ENCODE measurements at regions of chr6 and their contacts with region 1.

Region 1: GRCh38 chr6:119627908-119628669 is 278.5 kb upstream of the MAN1A1 start:
- DNase-seq: peak; percentile 58 to 84 (median 63)
- ATAC-seq: peak; percentile 91
- H3K4me3 ChIP-seq: no peak overlapping the region
- H3K27ac ChIP-seq: peak overlapping the region; percentile 89
- H3K4me1 ChIP-seq: peaks cover 8 to 31% of the 10 kb centered on the region in 2 experiments; a peak in 3 of 5 replicates
- H3K27me3 ChIP-seq: no peaks in the 10 kb centered on the region
- CTCF ChIP-seq: peak in 1 of 3 experiments; percentile 27; a peak in 2 of 6 replicates
- EP300 ChIP-seq: peak; percentile 82
- POLR2A ChIP-seq: no peak
- RAD21 ChIP-seq: peak; percentile 41 to 66

Region 2: GRCh38 chr6:119147101-119148053 is 480.7 kb before region 1 on chr6:
- CTCF ChIA-PET with region 1: no interaction called
- POLR2A ChIA-PET with region 1: no interaction called
- in situ Hi-C with region 1: no loop called
- intact Hi-C with region 1: loop called (anchors 5 kb)
- DNase-seq: peak; percentile 89 to 92 (median 91)
- ATAC-seq: peak; percentile 83
- H3K4me3 ChIP-seq: no peak overlapping the region
- H3K27ac ChIP-seq: peak overlapping the region; percentile 85
- H3K4me1 ChIP-seq: peaks cover 23 to 39% of the 10 kb centered on the region in 2 experiments
- H3K27me3 ChIP-seq: no peaks in the 10 kb centered on the region
- CTCF ChIP-seq: no peak
- EP300 ChIP-seq: peak; percentile 87
- POLR2A ChIP-seq: no peak
- RAD21 ChIP-seq: peak in 1 of 2 experiments; percentile 15; a peak in 1 of 4 replicates

Region 3: DNA sequence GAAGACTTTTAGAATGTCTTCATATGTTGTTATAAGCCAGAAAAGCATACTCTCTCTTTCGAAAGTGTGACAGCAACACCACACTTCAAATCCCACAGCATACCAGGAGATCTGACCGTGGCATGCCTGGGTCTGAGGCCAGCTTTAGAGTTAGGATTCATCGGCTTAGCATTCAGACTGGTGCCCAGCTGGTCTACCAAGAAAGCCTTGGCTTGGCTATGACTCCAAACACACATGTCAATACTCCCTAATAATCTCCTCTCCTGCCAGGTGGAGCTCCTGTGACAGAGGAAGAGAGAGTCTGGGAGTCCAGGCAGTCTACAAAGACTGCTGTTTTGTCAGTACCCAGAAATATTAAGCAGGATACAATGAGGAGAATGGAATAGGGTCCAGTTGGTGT is 201.5 kb before region 1 on chr6:
- CTCF ChIA-PET with region 1: no interaction called
- POLR2A ChIA-PET with region 1: no interaction called
- in situ Hi-C with region 1: no loop called
- intact Hi-C with region 1: loop called (anchors 5 kb)
- DNase-seq: no peak
- ATAC-seq: peak; percentile 66; the same call in 2 of the 3 replicates
- H3K4me3 ChIP-seq: no peak overlapping the region
- H3K27ac ChIP-seq: no peak overlapping the region
- H3K4me1 ChIP-seq: peaks cover 0 to 6% of the 10 kb centered on the region in 2 experiments; a peak in 1 of 5 replicates
- H3K27me3 ChIP-seq: no peaks in the 10 kb centered on the region
- CTCF ChIP-seq: 0 out of 6 replicates have a peak, but pooled peaks of 1 of the 3 experiments have one; percentile 10
- EP300 ChIP-seq: no peak
- POLR2A ChIP-seq: no peak
- RAD21 ChIP-seq: peak in 1 of 2 experiments; percentile 40; a peak in 2 of 4 replicates

Region 4: GRCh38 chr6:119495230-119495683 is 132.8 kb before region 1 on chr6:
- CTCF ChIA-PET with region 1: no interaction called
- POLR2A ChIA-PET with region 1: interaction called, 4 read pairs
- in situ Hi-C with region 1: no loop called
- intact Hi-C with region 1: loop called (anchors 5 kb)
- DNase-seq: peak in 1 of 4 experiments; percentile 22
- ATAC-seq: no peak
- H3K4me3 ChIP-seq: no peak overlapping the region
- H3K27ac ChIP-seq: no peak overlapping the region
- H3K4me1 ChIP-seq: peaks cover 2 to 7% of the 10 kb centered on the region in 2 experiments; a peak in 2 of 5 replicates
- H3K27me3 ChIP-seq: no peaks in the 10 kb centered on the region
- CTCF ChIP-seq: no peak
- EP300 ChIP-seq: no peak
- POLR2A ChIP-seq: no peak
- RAD21 ChIP-seq: no peak

Region 5: GRCh38 chr6:119541132-119541905 is 86.8 kb before region 1 on chr6:
- CTCF ChIA-PET with region 1: no interaction called
- POLR2A ChIA-PET with region 1: no interaction called
- in situ Hi-C with region 1: no loop called
- intact Hi-C with region 1: loop called (anchors 2 kb)
- DNase-seq: no peak
- ATAC-seq: 0 out of 3 replicates have a peak, but pooled peaks have one; percentile 12
- H3K4me3 ChIP-seq: no peak overlapping the region
- H3K27ac ChIP-seq: no peak overlapping the region
- H3K4me1 ChIP-seq: peaks cover 3 to 22% of the 10 kb centered on the region in 2 experiments; a peak in 4 of 5 replicates
- H3K27me3 ChIP-seq: no peaks in the 10 kb centered on the region
- CTCF ChIP-seq: no peak
- EP300 ChIP-seq: no peak
- POLR2A ChIP-seq: no peak
- RAD21 ChIP-seq: no peak